GM10248 (cell line): ENCODE measurements at regions of chr20 and their contacts with region 1.

Region 1: GRCh38 chr20:4082406-4083097 is 67.2 kb upstream of the RNF24 start:
- DNase-seq: no peak
- CTCF ChIP-seq: no peak

Region 2: DNA sequence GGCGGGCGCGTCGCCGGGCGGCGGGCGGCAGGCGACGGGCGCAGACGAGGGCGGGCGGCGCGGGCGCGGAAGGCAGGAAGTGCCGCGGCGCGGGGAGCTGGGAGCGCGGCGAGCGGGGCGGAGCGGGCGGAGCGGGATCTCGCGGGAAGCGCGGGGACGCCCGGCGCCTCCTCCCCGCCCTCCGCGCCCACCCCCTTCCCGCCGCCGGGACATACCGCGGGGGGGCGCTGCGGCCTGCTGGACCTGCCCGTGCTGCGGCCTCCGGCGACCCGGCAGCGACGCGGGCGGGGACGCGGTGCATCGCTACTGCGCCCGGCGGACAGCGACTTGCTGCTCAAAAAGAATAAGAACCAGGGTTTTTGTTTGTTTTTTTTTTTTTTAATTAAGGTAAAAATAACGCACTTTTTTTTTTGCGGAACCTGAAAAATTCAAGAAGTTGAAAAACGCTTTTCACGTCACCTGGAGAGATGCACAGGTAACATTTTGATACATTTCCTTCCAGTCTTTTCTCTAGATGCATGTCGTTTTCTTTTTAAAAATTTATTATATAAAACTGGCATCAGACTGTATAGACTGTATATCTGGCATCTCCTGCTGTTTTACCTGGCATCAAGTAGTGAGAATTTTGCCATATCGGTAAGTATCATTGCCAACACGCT is 295.8 kb before region 1 on chr20 and contains the start of gene CENPB:
- CTCF ChIA-PET with region 1: interaction called, 20 read pairs
- POLR2A ChIA-PET with region 1: no interaction called
- DNase-seq: peak; percentile 95
- CTCF ChIP-seq: peak; percentile 71

Region 3: DNA sequence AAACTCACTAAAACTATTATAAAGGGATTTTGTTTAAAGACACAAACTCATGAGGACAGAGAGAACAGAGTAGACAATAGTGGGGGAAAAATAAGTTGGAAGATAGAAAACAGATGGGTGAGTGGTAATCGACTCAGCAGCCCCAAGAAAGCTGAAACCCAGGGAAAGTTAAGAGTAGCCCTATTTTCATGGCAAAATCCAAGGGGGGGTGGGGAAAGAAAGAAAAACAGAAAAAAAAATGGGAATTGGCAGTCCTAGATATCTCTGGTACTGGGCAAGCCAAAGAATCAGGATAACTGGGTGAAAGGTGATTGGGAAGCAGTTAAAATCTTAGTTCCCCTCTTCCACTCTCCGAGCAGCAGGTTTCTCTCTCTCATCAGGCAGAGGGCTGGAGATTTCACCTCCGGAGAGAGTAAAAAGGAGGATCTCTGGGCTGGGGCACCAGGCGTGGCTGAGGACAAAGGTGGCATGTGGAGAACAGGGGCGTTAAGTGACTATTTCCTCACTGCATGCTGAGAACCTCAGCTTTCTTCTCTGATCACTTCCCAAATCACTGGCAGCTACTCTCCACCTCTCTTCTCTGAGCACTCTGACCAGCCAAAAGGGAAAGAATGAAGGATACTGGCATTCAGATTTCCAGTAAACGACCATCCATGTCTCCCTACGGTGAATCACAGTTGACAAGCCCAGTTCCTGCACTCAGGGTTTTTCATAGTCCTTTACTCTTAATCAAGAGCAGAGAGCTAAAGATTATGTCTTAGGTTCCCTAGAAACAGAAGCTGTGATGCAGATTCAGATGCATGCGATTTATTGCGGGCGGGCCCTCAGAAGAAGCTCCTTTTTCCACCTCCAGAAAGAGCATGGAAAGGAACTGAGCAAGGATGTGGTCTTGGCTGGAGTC is 59.9 kb before region 1 on chr20:
- CTCF ChIA-PET with region 1: interaction called, 13 read pairs
- POLR2A ChIA-PET with region 1: no interaction called
- DNase-seq: no peak
- CTCF ChIP-seq: no peak

Region 4: GRCh38 chr20:4060064-4060795 is 22.3 kb before region 1 on chr20:
- CTCF ChIA-PET with region 1: interaction called, 12 read pairs
- POLR2A ChIA-PET with region 1: no interaction called
- DNase-seq: peak; percentile 68
- CTCF ChIP-seq: no peak